ENCODE measurements at regions of chr5 and their contacts with region 1.

Region 1: GRCh38 chr5:131796793-131797693 is at the start of gene FNIP1:
- DNase-seq: peak; percentile 96 to 99 (median 98)
- ATAC-seq: peak; percentile 94
- H3K4me3 ChIP-seq: peak within 1 kb of the TSS; percentile 82 to 90
- H3K4me3 Mint-ChIP-seq: peak within 1 kb of the TSS; percentile 97
- H3K27ac ChIP-seq: peak within 1 kb of the TSS; percentile 88 to 93
- H3K27ac Mint-ChIP-seq: peak within 1 kb of the TSS; percentile 98
- H3K4me1 ChIP-seq: peaks cover 20% of the 10 kb centered on the region
- H3K4me1 Mint-ChIP-seq: peaks cover 37% of the 10 kb centered on the region
- H3K27me3 ChIP-seq: no peaks in the 10 kb centered on the region
- H3K27me3 Mint-ChIP-seq: no peaks in the 10 kb centered on the region
- CTCF ChIP-seq: no peak
- total RNA-seq, gene FNIP1: 29.4 to 29.7 TPM

Region 2: GRCh38 chr5:131514316-131515283 is 282.4 kb before region 1 on chr5:
- CTCF ChIA-PET with region 1: no interaction called
- POLR2A ChIA-PET with region 1: no interaction called
- intact Hi-C with region 1: loop called in 1 of 2 experiments (anchors 10 kb)
- DNase-seq: peak in 3 of 9 experiments; percentile 24 to 82 (median 72)
- ATAC-seq: peak; percentile 78
- H3K4me3 ChIP-seq: peak overlapping the region; percentile 31 to 36
- H3K4me3 Mint-ChIP-seq: peak overlapping the region; percentile 76
- H3K27ac ChIP-seq: peak overlapping the region; percentile 8 to 71
- H3K27ac Mint-ChIP-seq: peak overlapping the region; percentile 86
- H3K4me1 ChIP-seq: peaks cover 50% of the 10 kb centered on the region
- H3K4me1 Mint-ChIP-seq: peaks cover 63% of the 10 kb centered on the region
- H3K27me3 ChIP-seq: no peaks in the 10 kb centered on the region
- H3K27me3 Mint-ChIP-seq: no peaks in the 10 kb centered on the region
- CTCF ChIP-seq: peak; percentile 9

Region 3: DNA sequence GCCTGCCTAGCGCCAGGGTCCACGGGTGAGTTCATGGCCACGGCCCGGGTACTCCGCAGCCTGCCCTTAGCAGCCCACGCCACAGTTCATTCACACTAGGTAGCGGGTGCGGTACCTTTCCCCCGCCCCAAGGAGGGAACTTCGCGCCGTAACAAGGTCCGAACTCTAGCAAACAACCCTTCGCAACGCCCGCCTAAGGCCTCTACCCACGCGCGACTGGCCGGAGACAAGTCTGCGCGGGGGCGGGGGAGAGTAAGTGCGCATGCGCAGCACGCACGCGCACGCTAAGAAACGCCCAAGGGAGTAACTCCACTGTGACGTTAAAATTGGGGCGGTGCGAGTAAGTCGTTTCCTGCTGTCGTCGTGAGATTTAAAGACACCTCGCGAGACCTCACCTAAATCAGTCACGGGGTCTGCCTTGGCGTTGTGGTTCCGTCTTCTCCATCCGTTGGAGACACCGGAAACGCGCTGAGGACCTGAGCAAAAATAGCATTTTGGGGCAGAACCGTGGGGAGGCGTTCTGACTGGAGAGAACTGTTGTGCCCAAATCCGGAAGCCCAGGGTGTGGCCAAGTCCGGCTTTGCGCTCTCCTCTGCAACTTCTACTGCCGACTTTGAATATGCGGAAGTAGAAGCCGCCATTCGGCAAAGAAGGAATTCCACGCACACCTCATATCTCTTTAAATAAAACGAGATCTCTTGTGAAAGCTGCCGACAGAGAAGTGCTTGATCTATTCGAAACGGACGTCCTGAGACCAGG is 161.9 kb before region 1 on chr5 and contains the start of gene RAPGEF6:
- CTCF ChIA-PET with region 1: no interaction called
- POLR2A ChIA-PET with region 1: interaction called, 15 read pairs
- intact Hi-C with region 1: loop called (anchors 1 kb)
- DNase-seq: peak; percentile 91 to 100 (median 95)
- ATAC-seq: peak; percentile 83
- H3K4me3 ChIP-seq: peak within 1 kb of the TSS; percentile 83
- H3K4me3 Mint-ChIP-seq: peak within 1 kb of the TSS; percentile 96
- H3K27ac ChIP-seq: peak within 1 kb of the TSS; percentile 94 to 98
- H3K27ac Mint-ChIP-seq: peak within 1 kb of the TSS; percentile 99
- H3K4me1 ChIP-seq: peaks cover 61% of the 10 kb centered on the region
- H3K4me1 Mint-ChIP-seq: peaks cover 34% of the 10 kb centered on the region
- H3K27me3 ChIP-seq: no peaks in the 10 kb centered on the region
- H3K27me3 Mint-ChIP-seq: no peaks in the 10 kb centered on the region
- CTCF ChIP-seq: no peak
- total RNA-seq, gene RAPGEF6: 64.3 to 71.7 TPM

Region 4: DNA sequence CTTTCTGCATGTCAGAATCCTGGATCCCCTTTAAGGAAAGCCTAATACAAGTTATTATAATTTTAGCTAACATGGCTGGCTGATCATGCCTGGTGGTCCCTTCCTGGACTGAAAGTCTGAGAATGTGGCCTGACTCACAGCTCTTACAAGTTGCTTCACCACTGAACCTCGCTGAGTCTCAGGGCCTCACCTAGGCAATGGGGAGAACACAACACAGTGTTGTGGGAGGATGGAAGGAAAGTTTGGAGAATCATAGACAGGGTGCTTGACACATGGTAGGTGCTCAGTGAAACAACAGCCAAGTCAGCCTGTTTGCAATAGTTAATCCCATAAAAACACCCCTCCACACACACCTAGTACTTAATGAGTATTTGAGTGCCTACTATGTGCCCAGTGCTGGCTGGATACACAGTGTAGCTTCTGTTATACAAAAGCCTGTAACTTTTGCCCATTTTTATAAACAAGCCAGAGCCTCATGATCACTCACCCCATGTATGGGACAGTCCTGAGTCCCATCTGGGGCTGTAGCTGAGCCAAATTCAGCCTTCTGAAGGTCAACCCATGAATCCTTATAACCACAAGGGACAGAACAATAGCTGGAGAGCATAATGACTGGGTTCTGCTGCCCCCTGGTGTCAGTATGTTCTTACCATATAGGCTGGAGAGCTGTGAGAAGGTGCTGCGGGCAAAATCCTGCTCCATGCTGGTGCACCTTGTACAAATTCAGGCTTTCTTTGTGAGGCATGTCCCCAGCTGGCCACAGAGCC is 210.5 kb after region 1 on chr5:
- CTCF ChIA-PET with region 1: no interaction called
- POLR2A ChIA-PET with region 1: no interaction called
- intact Hi-C with region 1: loop called (anchors 5 kb)
- DNase-seq: peak; percentile 51 to 84 (median 79)
- ATAC-seq: peak; percentile 47
- H3K4me3 ChIP-seq: no peak overlapping the region
- H3K4me3 Mint-ChIP-seq: no peak overlapping the region
- H3K27ac ChIP-seq: no peak overlapping the region
- H3K27ac Mint-ChIP-seq: no peak overlapping the region
- H3K4me1 ChIP-seq: peaks cover 11% of the 10 kb centered on the region
- H3K4me1 Mint-ChIP-seq: peaks cover 23% of the 10 kb centered on the region
- H3K27me3 ChIP-seq: peaks cover 0 to 9% of the 10 kb centered on the region in 2 experiments
- H3K27me3 Mint-ChIP-seq: peaks cover 13% of the 10 kb centered on the region
- CTCF ChIP-seq: peak; percentile 67

Region 5: DNA sequence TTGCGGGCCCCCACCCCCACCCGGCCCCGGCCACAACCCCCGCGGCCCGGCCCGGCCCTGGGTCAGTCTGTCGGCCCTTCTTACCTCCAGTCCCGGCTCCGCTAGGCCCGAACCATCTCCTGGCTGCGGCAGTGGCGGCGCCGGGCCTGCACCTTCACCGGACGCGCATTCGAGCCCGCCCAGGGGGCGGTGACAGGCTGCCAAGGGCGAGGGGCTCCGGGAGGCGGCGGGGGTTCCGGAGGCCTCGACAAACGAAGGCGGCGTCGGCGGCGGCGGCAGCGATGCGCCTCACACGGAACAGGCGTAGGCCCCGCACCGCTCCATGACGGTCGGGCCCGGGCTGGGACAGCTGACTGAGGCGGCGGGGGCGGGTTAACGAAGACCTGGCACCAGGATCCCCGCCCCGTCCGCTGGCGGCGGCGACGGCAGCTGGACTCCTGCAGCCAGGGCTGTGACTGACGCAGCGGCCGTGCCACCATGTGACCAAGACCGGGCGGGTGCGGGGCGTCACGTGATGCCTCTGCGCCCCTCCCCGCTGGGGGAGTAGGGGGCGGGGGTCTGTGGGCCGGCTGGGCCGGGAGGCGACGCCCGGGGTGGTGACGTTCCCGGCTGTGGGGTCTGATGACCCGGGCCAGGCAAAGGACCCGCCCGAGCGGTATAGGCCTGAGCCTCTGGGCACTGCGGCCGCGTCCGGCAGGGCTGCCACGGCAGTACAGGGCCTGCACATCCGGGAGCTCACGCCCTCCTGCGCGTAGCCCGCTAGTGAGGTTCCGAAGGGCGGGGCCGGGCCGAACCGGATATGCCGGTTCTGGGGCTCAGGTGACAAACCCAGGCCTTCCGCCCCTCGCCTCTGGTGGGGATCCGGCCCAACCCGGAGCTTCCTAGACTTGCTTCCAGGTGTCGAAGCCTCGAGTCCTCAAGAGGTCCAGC is 1166.4 kb after region 1 on chr5 and contains the start of gene AFF4:
- CTCF ChIA-PET with region 1: no interaction called
- POLR2A ChIA-PET with region 1: no interaction called
- intact Hi-C with region 1: loop called in 1 of 2 experiments (anchors 5 kb)
- DNase-seq: peak; percentile 69 to 93 (median 84)
- ATAC-seq: peak; percentile 75
- H3K4me3 ChIP-seq: peak within 1 kb of the TSS; percentile 52 to 71
- H3K4me3 Mint-ChIP-seq: peak within 1 kb of the TSS; percentile 95
- H3K27ac ChIP-seq: peak within 1 kb of the TSS; percentile 84 to 92
- H3K27ac Mint-ChIP-seq: peak within 1 kb of the TSS; percentile 99
- H3K4me1 ChIP-seq: peaks cover 35% of the 10 kb centered on the region
- H3K4me1 Mint-ChIP-seq: peaks cover 43% of the 10 kb centered on the region
- H3K27me3 ChIP-seq: no peaks in the 10 kb centered on the region
- H3K27me3 Mint-ChIP-seq: no peaks in the 10 kb centered on the region
- CTCF ChIP-seq: no peak
- total RNA-seq, gene AFF4: 98.0 to 104 TPM